ENCODE measurements at regions of chr21 and their contacts with region 1.

Region 1: GRCh38 chr21:41121785-41122421 is 46.1 kb upstream of the BACE2 start:
- DNase-seq: peak; percentile 41
- ATAC-seq: peak; percentile 31
- H3K4me3 Mint-ChIP-seq: no peak overlapping the region
- H3K27ac Mint-ChIP-seq: no peak overlapping the region
- H3K4me1 Mint-ChIP-seq: no peaks in the 10 kb centered on the region
- H3K27me3 Mint-ChIP-seq: peaks cover 5% of the 10 kb centered on the region
- CTCF ChIP-seq: no peak

Region 2: DNA sequence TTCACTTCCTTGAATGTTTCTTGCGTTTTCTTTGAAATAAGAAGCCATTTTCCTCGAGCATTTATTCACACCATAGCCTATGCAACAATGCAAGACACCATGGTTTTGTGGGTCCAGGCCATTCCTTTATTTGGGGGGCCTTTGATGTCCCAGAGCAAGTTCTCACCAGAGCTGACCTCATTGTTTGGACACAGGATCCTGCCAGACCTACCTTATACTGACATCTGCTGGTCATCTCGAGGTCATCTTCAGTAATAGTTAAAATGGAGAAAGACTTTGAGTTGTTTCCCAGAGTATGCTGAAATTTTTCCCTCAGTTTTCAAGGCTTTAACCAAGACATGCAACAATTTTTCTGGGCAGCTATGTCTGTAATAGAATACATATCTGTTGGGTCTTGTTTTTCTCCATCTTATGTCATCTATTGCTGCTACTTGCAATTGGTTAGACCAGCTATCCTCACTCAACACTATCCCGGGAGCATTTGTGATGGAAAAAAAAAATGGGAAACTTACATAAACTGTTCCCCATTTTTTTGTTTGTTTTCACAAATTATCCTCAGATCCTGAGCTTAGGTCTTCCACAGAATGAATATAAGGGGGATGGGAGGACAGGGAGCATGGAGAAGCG is 12.1 kb after region 1 on chr21:
- CTCF ChIA-PET with region 1: interaction called, 14 read pairs
- POLR2A ChIA-PET with region 1: no interaction called
- intact Hi-C with region 1: no loop called
- DNase-seq: no peak
- ATAC-seq: no peak
- H3K4me3 Mint-ChIP-seq: no peak overlapping the region
- H3K27ac Mint-ChIP-seq: no peak overlapping the region
- H3K4me1 Mint-ChIP-seq: peaks cover 2% of the 10 kb centered on the region
- H3K27me3 Mint-ChIP-seq: peaks cover 25% of the 10 kb centered on the region
- CTCF ChIP-seq: no peak

Region 3: GRCh38 chr21:41460578-41461527 is 338.9 kb after region 1 on chr21:
- CTCF ChIA-PET with region 1: interaction called, 4 read pairs
- POLR2A ChIA-PET with region 1: no interaction called
- intact Hi-C with region 1: loop called (anchors 1 kb)
- DNase-seq: peak; percentile 39
- ATAC-seq: peak; percentile 80
- H3K4me3 Mint-ChIP-seq: no peak overlapping the region
- H3K27ac Mint-ChIP-seq: peak overlapping the region; percentile 0
- H3K4me1 Mint-ChIP-seq: peaks cover 21% of the 10 kb centered on the region
- H3K27me3 Mint-ChIP-seq: no peaks in the 10 kb centered on the region
- CTCF ChIP-seq: peak; percentile 39